Activated CD8-positive, alpha-beta memory T cell treated with anti-CD3 and anti-CD28 coated beads, Interleukin-2, amount 10 ng/mL, durations not matched to agents 7 days and 5 days (primary cell): ENCODE measurements at regions of chr9 and their contacts with region 1.

Region 1: GRCh38 chr9:126500684-126501382 is 112.9 kb upstream of the LMX1B start:
- DNase-seq: peak; percentile 69
- ATAC-seq: peak; percentile 55
- H3K4me3 Mint-ChIP-seq: no peak overlapping the region
- H3K27ac Mint-ChIP-seq: no peak overlapping the region
- H3K4me1 Mint-ChIP-seq: peaks cover 9% of the 10 kb centered on the region
- H3K27me3 Mint-ChIP-seq: peaks cover 3% of the 10 kb centered on the region

Region 2: DNA sequence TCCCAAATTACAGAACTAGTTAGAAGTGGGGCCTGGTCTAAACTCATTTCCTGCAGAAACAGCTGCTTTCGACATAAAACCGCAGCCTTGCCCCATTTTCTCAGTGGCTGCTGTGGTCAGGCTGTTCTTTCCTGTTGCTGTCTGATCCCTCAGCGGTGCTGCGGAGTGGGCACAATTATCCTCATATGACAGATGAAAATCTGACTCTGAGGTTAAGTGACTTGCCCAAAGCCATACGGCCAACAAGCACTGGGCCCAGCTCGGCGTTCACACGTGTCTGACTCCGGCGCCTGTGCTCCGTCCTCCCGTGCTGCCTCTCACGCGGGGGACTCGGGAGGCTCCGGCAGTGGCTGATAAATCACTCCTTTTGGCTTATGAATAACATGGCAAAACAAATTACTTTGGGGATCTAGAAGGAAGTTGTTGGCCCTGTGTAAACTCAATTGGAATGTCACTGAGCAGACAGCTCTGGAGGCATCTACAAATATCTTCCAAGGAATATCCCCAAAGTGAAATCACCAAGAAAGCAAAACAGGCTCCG is 29.7 kb before region 1 on chr9:
- CTCF ChIA-PET with region 1: interaction called, 16 read pairs
- DNase-seq: peak; percentile 96
- ATAC-seq: peak; percentile 80
- H3K4me3 Mint-ChIP-seq: peak overlapping the region; percentile 33
- H3K27ac Mint-ChIP-seq: peak overlapping the region; percentile 92
- H3K4me1 Mint-ChIP-seq: peaks cover 68% of the 10 kb centered on the region
- H3K27me3 Mint-ChIP-seq: peaks cover 3% of the 10 kb centered on the region

Region 3: GRCh38 chr9:126482361-126483044 is 18.3 kb before region 1 on chr9:
- CTCF ChIA-PET with region 1: interaction called, 12 read pairs
- DNase-seq: no peak
- ATAC-seq: no peak
- H3K4me3 Mint-ChIP-seq: no peak overlapping the region
- H3K27ac Mint-ChIP-seq: no peak overlapping the region
- H3K4me1 Mint-ChIP-seq: peaks cover 14% of the 10 kb centered on the region
- H3K27me3 Mint-ChIP-seq: no peaks in the 10 kb centered on the region

Region 4: DNA sequence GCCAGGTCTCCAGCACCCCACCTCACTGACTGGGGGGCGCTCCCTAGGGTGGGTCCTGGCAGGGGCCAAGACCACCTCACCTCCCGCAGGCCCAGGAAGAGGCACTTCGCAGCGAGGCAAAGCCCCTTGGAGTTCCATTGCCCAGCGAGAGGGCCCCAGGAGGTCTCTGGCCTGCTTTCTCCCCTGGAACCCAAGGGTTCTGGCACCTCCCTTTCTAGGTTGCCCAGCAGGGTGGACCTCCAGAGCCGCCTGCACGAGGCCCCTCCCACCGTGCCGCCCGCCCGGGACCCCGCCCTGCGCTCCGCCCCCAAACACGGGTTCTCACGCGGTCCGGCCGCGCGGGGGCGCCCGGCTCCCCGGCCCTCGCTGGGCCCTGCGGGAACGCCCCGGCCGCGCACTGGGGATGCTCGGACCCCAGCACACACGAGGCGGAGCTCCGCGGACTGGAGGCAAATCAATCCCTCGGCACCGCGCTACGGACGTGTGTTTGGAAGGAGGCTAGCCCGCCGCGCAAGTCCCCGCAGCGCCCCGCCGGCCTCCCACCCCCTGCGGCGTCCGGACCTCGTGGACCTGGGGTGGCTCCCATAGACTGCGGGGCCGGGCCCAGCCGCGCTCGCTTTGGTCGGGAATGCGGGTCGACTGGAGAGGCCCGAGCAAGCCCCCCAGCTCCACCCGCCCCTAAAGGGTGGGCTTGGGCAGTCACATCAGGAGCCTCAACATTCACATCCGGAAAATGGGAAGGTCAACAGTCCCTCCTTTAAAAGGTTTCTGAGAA is 13.4 kb after region 1 on chr9:
- CTCF ChIA-PET with region 1: interaction called, 44 read pairs
- DNase-seq: peak; percentile 75
- ATAC-seq: peak; percentile 83
- H3K4me3 Mint-ChIP-seq: no peak overlapping the region
- H3K27ac Mint-ChIP-seq: no peak overlapping the region
- H3K4me1 Mint-ChIP-seq: peaks cover 30% of the 10 kb centered on the region
- H3K27me3 Mint-ChIP-seq: peaks cover 66% of the 10 kb centered on the region

Region 5: GRCh38 chr9:126523611-126524111 is 22.8 kb after region 1 on chr9:
- CTCF ChIA-PET with region 1: interaction called, 39 read pairs
- DNase-seq: peak; percentile 78
- ATAC-seq: peak; percentile 86
- H3K4me3 Mint-ChIP-seq: peak overlapping the region; percentile 73
- H3K27ac Mint-ChIP-seq: peak overlapping the region; percentile 82
- H3K4me1 Mint-ChIP-seq: peaks cover 39% of the 10 kb centered on the region
- H3K27me3 Mint-ChIP-seq: peaks cover 46% of the 10 kb centered on the region

Region 6: GRCh38 chr9:126558051-126558665 is 57.3 kb after region 1 on chr9:
- CTCF ChIA-PET with region 1: interaction called, 146 read pairs
- DNase-seq: peak; percentile 75
- ATAC-seq: peak; percentile 83
- H3K4me3 Mint-ChIP-seq: no peak overlapping the region
- H3K27ac Mint-ChIP-seq: no peak overlapping the region
- H3K4me1 Mint-ChIP-seq: no peaks in the 10 kb centered on the region
- H3K27me3 Mint-ChIP-seq: peaks cover 36% of the 10 kb centered on the region

Region 7: GRCh38 chr9:126564161-126564560 is 63.3 kb after region 1 on chr9:
- CTCF ChIA-PET with region 1: interaction called, 10 read pairs
- DNase-seq: no peak
- ATAC-seq: no peak
- H3K4me3 Mint-ChIP-seq: no peak overlapping the region
- H3K27ac Mint-ChIP-seq: no peak overlapping the region
- H3K4me1 Mint-ChIP-seq: no peaks in the 10 kb centered on the region
- H3K27me3 Mint-ChIP-seq: peaks cover 52% of the 10 kb centered on the region